Panc1 (cell line): ENCODE measurements at regions of chr20 and their contacts with region 1.

Region 1: GRCh38 chr20:4108495-4109306 is 93.3 kb upstream of the RNF24 start:
- DNase-seq: peak; percentile 90
- ATAC-seq: peak; percentile 86
- H3K4me3 ChIP-seq: no peak overlapping the region; a peak in 1 of 4 replicates
- H3K27ac ChIP-seq: peak overlapping the region; percentile 92
- H3K4me1 ChIP-seq: peaks cover 36% of the 10 kb centered on the region
- H3K27me3 ChIP-seq: no peaks in the 10 kb centered on the region
- CTCF ChIP-seq: peak; percentile 99

Region 2: DNA sequence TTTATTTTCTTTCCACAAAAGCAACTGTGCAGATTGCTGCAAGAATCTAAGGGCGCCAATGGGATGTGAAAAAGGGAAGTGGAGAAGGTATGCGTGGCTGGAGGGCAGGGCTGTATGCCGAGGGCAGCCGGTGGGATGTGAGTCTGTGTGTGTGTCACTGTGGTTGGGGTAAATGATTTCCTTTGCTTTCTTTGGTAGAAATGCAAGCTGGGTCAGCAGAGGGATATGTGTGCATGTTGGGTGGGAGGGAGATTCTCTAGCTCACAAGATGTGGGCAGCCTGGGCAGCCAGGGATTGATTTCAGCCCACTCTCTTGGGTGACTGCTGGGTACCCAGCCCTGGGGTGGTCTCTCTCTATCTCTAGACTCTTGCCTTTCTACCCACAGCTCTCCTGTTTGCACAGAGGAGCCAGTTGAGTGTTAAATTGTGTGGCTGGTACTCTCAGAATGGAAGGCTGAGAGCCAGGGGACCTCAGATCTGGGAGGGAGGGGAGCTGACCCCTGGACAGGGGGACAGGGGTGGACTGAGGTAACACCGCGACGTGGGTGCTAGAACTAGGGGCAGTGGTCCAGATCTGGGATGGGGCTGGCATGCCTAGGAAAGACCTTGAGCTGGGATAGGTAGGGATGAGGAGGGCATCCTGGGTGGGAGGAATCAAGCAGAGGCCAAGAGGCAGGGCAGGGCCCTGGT is 43.5 kb after region 1 on chr20:
- CTCF ChIA-PET with region 1: interaction called, 4 read pairs
- POLR2A ChIA-PET with region 1: no interaction called
- in situ Hi-C with region 1: no loop called
- intact Hi-C with region 1: loop called (anchors 5 kb)
- DNase-seq: no peak
- ATAC-seq: no peak
- H3K4me3 ChIP-seq: peak overlapping the region in 1 of 2 experiments; percentile 30; a peak in 2 of 4 replicates
- H3K27ac ChIP-seq: peak overlapping the region; percentile 54; the same call in 1 of the 2 replicates
- H3K4me1 ChIP-seq: peaks cover 54% of the 10 kb centered on the region
- H3K27me3 ChIP-seq: no peaks in the 10 kb centered on the region
- CTCF ChIP-seq: no peak

Region 3: GRCh38 chr20:4180356-4180755 is 71.7 kb after region 1 on chr20:
- CTCF ChIA-PET with region 1: interaction called, 10 read pairs
- POLR2A ChIA-PET with region 1: no interaction called
- in situ Hi-C with region 1: no loop called
- intact Hi-C with region 1: no loop called
- DNase-seq: no peak
- ATAC-seq: no peak
- H3K4me3 ChIP-seq: no peak overlapping the region
- H3K27ac ChIP-seq: no peak overlapping the region
- H3K4me1 ChIP-seq: no peaks in the 10 kb centered on the region
- H3K27me3 ChIP-seq: no peaks in the 10 kb centered on the region
- CTCF ChIP-seq: no peak

Region 4: DNA sequence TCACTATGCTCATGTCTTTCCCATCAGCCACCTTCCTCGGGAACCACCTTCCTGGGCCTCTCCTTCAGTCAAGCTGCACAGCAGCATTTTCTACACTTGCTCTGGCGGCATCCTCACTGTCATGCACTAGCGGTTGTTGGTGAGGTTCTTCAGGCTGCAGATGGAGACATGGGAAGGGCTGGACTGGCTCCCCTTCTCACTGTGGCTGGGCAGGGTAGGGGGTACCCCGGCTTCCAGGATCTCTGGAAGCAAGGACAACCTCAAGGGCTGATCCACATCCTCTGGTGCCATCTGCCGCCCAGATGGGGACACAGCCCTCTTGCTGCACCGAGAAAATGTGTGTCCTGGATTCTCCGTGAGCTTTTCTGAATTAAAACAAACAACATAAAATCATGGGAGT is 86.8 kb after region 1 on chr20:
- CTCF ChIA-PET with region 1: interaction called, 5 read pairs
- POLR2A ChIA-PET with region 1: no interaction called
- in situ Hi-C with region 1: no loop called
- intact Hi-C with region 1: loop called (anchors 1 kb)
- DNase-seq: no peak
- ATAC-seq: no peak
- H3K4me3 ChIP-seq: no peak overlapping the region
- H3K27ac ChIP-seq: no peak overlapping the region
- H3K4me1 ChIP-seq: no peaks in the 10 kb centered on the region
- H3K27me3 ChIP-seq: no peaks in the 10 kb centered on the region
- CTCF ChIP-seq: peak; percentile 82

Region 5: GRCh38 chr20:4227085-4227821 is 118.6 kb after region 1 on chr20:
- CTCF ChIA-PET with region 1: interaction called, 13 read pairs
- POLR2A ChIA-PET with region 1: no interaction called
- in situ Hi-C with region 1: no loop called
- intact Hi-C with region 1: no loop called
- DNase-seq: no peak
- ATAC-seq: peak; percentile 79
- H3K4me3 ChIP-seq: no peak overlapping the region
- H3K27ac ChIP-seq: no peak overlapping the region
- H3K4me1 ChIP-seq: peaks cover 5% of the 10 kb centered on the region
- H3K27me3 ChIP-seq: no peaks in the 10 kb centered on the region
- CTCF ChIP-seq: peak; percentile 74

Region 6: DNA sequence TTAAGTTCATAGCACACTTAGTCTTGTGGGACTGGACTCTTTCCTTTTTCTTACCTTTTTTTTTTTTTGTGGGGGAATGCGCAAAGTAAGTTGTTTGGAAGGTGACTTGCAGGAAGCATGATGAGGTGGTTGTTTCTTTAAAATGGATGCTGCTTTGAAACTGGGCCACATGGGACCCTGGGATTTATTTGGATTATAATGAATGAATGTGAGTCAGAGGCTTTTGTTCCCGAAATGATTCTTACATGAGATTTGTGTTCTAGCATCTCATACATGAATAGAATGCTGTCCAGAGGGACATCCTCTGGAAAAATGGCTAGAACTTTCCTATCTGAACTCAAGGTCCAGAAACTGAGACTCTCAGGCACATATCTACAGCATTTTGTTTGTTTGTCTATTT is 143.3 kb after region 1 on chr20:
- CTCF ChIA-PET with region 1: no interaction called
- POLR2A ChIA-PET with region 1: interaction called, 10 read pairs
- in situ Hi-C with region 1: no loop called
- intact Hi-C with region 1: no loop called
- DNase-seq: no peak
- ATAC-seq: no peak
- H3K4me3 ChIP-seq: no peak overlapping the region
- H3K27ac ChIP-seq: no peak overlapping the region
- H3K4me1 ChIP-seq: no peaks in the 10 kb centered on the region
- H3K27me3 ChIP-seq: peaks cover 4% of the 10 kb centered on the region
- CTCF ChIP-seq: no peak

Region 7: DNA sequence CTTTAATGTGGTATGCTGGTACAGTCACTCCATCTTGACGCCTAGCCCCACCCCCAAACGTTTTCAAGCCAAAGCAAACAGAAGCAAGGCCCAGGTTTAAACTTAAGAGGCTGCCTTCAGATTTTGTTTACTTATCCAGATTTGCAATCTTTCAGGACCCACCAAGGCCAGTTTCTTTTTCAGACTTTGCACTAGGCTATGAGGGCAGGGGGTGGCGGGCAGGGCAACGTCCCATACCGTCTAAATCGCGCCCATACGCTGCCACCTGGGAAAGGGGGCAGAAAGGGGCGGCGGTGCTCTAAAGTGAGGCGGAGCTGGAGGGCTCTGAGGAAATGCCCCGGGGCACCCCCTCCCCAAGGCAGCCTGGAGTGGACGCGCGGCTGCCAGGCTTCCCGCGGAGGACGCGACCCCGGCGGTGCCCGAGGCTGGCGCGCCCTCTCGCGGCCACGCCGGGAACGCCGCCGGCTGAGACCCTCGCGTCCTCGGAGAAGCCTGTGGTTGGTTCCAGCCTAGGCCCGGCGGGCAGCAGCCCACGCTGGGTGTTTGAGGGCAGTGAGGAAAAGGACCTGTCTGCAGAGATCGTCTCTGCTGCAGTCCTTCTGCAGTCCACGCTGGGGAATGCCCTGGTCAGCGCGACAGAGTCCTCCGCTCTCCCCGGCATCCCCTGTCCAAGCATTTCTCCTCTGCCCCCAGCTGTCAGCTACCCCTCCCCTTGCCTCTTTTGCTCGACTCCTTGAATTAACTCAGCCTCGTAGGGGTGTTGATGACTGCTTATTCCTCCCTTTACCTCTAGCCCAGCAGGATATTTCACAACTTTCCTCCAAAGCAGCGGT is 483.8 kb after region 1 on chr20:
- CTCF ChIA-PET with region 1: no interaction called
- POLR2A ChIA-PET with region 1: no interaction called
- in situ Hi-C with region 1: no loop called
- intact Hi-C with region 1: loop called (anchors 5 kb)
- DNase-seq: no peak
- ATAC-seq: peak; percentile 94
- H3K4me3 ChIP-seq: peak overlapping the region; percentile 38 to 54
- H3K27ac ChIP-seq: no peak overlapping the region
- H3K4me1 ChIP-seq: no peaks in the 10 kb centered on the region
- H3K27me3 ChIP-seq: peaks cover 4% of the 10 kb centered on the region; the same call in 1 of the 2 replicates
- CTCF ChIP-seq: peak; percentile 98